Panc1 (cell line): ENCODE measurements at regions of chr1 and their contacts with region 1.

Region 1: GRCh38 chr1:30911046-30911954 is 2.7 kb upstream of the SDC3 start:
- DNase-seq: peak; percentile 53
- ATAC-seq: peak; percentile 79
- H3K4me3 ChIP-seq: no peak overlapping the region
- H3K27ac ChIP-seq: no peak overlapping the region
- H3K4me1 ChIP-seq: peaks cover 10% of the 10 kb centered on the region
- H3K27me3 ChIP-seq: no peaks in the 10 kb centered on the region
- CTCF ChIP-seq: peak; percentile 93

Region 2: DNA sequence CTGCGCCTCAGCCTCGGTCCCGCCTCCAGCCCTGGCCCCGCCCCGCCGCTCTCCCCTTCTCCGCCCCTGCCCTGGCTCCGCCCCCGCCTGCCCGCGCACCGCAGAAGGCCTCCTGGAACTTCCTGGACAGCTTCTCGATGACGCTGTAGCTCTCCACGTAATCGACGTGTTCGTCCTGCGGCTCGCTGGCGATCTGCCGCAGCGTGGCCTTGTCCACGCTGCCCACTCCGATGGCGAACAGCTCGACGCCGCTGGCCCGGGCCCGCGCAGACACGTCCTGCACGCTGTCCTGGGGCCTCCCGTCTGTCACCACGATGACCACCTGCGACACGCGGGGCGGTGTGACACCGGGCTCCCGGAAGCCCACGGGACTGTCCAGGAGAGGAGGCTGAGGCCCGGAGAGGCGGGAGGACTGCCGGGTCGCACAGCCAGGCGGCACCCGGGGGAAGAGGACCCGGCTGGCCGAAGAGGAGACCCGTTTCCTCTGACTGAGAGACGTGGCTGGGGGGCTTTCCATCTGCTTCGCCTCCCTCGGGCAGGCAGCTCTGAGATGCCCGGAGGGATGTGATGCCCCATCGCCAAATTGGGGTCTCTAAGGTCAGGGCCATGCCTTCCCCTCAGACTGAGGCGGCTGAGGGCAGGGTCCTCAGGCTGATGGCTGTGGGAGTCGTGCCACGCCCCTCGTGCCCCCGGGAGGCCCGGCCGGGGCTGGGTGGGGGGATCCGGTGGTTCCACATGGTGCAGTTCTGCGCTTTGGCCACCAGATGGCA is 192.5 kb before region 1 on chr1:
- CTCF ChIA-PET with region 1: interaction called, 5 read pairs
- POLR2A ChIA-PET with region 1: no interaction called
- in situ Hi-C with region 1: no loop called
- intact Hi-C with region 1: loop called (anchors 5 kb)
- DNase-seq: no peak
- ATAC-seq: peak; percentile 84
- H3K4me3 ChIP-seq: peak overlapping the region; percentile 71 to 80
- H3K27ac ChIP-seq: peak overlapping the region; percentile 86
- H3K4me1 ChIP-seq: peaks cover 7% of the 10 kb centered on the region; the same call in 1 of the 2 replicates
- H3K27me3 ChIP-seq: no peaks in the 10 kb centered on the region
- CTCF ChIP-seq: peak; percentile 92

Region 3: GRCh38 chr1:30801771-30802198 is 109.5 kb before region 1 on chr1:
- CTCF ChIA-PET with region 1: interaction called, 71 read pairs
- POLR2A ChIA-PET with region 1: interaction called, 3 read pairs
- in situ Hi-C with region 1: loop called (anchors 25 kb)
- intact Hi-C with region 1: loop called (anchors 1 kb)
- DNase-seq: no peak
- ATAC-seq: peak; percentile 86
- H3K4me3 ChIP-seq: peak overlapping the region in 1 of 2 experiments; percentile 36; a peak in 2 of 4 replicates
- H3K27ac ChIP-seq: no peak overlapping the region
- H3K4me1 ChIP-seq: no peaks in the 10 kb centered on the region
- H3K27me3 ChIP-seq: no peaks in the 10 kb centered on the region
- CTCF ChIP-seq: peak; percentile 98

Region 4: DNA sequence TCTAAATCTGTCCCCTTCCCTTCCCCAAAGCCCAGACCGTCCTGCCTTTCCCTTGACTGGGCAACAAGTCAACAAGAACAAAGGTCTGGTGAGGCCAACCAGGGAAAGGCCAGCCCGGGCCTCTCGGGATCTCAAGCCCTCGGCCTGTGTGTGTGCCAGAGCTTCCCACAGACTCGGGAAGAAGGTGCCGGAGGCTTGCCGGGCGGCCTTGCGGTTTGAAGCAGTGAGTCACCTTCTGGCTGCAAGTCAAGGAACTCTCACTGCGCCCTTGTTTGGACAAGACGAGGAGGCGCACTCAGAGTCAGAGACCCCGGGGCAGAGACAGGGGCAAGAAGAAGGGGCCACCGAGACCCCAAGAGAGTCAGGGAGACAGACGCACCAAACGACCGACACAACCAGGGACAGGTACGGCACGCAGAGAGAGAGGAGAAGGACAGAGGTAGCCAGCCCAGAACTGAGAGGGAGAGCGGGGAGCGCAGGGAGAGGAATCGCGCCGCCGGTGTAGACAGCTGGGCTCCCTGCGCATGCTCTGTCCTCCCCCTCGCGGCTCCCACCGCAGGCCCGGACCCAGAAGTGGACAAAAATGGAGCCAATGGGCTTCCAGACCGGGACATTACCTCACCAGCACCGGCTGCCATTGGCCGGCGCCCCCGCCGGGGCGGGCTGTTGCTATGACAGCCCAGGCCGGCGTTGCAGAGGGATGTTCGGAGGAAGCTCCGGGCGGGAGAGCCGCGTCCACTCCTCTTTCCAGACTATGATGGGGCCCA is 87.1 kb before region 1 on chr1:
- CTCF ChIA-PET with region 1: no interaction called
- POLR2A ChIA-PET with region 1: no interaction called
- in situ Hi-C with region 1: loop called (anchors 25 kb)
- intact Hi-C with region 1: no loop called
- DNase-seq: peak; percentile 94
- ATAC-seq: peak; percentile 96
- H3K4me3 ChIP-seq: peak overlapping the region; percentile 48 to 71
- H3K27ac ChIP-seq: peak overlapping the region; percentile 80
- H3K4me1 ChIP-seq: peaks cover 11% of the 10 kb centered on the region
- H3K27me3 ChIP-seq: no peaks in the 10 kb centered on the region
- CTCF ChIP-seq: no peak